ENCODE measurements at regions of chr11 and their contacts with region 1.

Region 1: DNA sequence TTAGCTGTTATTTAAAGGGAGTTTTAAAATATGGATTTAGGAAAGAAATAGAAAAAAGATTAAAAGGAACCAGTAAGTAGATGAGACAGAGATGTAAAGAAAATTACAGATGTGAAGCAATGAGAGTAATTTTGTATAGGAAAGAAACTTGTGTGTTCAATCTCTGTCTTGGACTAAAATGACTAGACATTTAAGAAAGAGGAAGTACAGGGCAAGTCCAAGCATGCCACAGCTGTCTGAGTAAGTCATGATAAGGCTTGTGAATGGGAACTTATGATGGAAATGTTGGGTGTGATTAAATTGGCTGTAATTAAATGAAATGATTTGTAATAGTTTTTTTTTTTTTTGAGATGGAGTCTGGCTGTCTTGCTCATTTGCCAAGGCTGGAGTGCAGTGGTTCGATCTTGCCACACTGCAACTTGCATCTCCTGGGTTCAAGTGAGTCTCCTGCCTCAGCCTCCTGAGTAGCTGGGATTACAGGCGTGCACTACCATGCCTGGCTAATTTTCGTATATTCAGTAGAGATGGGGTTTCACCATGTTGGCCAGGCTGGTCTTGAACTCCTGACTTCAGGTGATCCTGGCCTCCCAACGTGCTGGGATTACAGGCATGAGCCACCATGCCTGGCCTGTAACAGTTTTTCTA is 5.9 kb upstream of the ACY3 start:
- DNase-seq: peak; percentile 82 to 96 (median 93)
- H3K4me3 ChIP-seq: no peak overlapping the region
- H3K27ac ChIP-seq: no peak overlapping the region
- H3K4me1 ChIP-seq: peaks cover 5 to 24% (median 15%) of the 10 kb centered on the region in 4 experiments
- H3K27me3 ChIP-seq: no peaks in the 10 kb centered on the region

Region 2: DNA sequence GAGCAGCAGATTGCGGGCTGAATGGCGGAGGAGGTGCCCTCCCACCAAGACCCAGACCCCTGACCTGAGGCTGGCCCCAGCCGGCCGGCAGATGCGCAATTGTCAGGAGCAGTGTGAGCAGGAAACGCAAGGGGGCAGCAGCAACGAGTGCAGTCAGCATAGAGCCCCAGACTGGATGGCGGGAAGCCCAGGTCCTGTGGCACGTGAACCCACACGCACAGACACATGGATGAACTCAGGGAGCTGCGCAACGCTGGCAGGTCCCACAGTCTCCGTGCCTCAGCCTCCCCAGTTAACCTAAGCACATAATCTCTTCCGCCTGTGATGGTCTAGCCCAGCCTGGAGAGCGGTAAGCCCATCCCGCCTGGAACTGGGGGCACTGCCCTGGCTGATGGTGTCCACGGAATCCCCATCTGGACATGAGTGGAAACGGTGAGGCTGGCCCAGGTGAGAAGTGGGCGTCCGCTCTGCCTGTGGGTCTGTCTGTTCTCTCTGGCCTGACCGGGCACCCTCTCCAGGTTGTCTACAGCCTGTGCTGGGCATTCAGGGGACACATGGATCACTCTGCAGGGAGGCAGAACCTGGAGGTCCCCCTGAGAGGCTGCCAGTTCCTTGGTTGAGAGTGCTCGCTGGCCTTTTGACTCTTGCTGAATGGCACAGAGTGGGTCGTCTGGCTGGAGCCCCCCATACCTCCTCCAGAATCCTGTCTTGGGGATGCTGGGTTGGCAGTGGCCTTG is 16.2 kb before region 1 on chr11:
- CTCF ChIA-PET with region 1: interaction called, 169 read pairs
- POLR2A ChIA-PET with region 1: no interaction called
- DNase-seq: peak; percentile 63 to 74 (median 73)
- H3K4me3 ChIP-seq: no peak overlapping the region
- H3K27ac ChIP-seq: no peak overlapping the region
- H3K4me1 ChIP-seq: peaks cover 0 to 11% (median 4%) of the 10 kb centered on the region in 4 experiments
- H3K27me3 ChIP-seq: no peaks in the 10 kb centered on the region